Activated CD4-positive, alpha-beta memory T cell treated with anti-CD3 and anti-CD28 coated beads for 36 hours (primary cell): ENCODE measurements at regions of chr12 and their contacts with region 1.

Region 1: DNA sequence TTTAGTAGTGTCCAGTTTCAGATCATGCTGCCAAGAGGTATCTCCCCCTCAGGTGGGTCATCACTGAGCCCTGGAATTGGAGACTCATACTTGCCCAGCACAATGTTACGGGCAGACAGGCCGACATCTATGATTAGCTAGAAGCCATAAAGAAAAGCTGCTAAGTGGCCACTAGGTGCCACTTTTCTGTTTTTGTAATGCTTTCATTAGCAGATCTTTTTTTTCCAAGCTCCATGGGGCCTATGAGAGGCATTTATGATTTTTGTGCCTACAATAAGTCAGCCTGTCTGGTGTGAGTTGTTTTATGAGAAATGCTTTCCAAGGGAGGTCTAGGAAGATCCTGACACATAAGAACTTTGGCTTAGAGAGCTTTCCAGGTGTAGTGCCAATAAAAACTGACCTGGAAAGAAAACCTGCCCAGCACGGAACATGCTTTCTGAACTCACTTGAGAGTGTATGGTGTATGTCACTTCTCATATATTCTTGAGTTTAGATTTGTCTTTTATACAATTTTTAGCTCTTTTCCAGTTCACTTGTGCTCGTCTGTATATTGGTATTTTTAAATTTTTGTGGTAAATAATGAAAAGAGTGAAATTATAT is 21.8 kb upstream of the SMCO2 start:
- DNase-seq: no peak
- H3K4me3 Mint-ChIP-seq: no peak overlapping the region
- H3K27ac Mint-ChIP-seq: no peak overlapping the region
- H3K4me1 Mint-ChIP-seq: peaks cover 2% of the 10 kb centered on the region
- H3K27me3 Mint-ChIP-seq: peaks cover 2% of the 10 kb centered on the region

Region 2: GRCh38 chr12:27652174-27652763 is 227.5 kb after region 1 on chr12:
- CTCF ChIA-PET with region 1: interaction called, 15 read pairs
- POLR2A ChIA-PET with region 1: no interaction called
- intact Hi-C with region 1: no loop called
- DNase-seq: peak; percentile 14
- H3K4me3 Mint-ChIP-seq: no peak overlapping the region
- H3K27ac Mint-ChIP-seq: no peak overlapping the region
- H3K4me1 Mint-ChIP-seq: peaks cover 2% of the 10 kb centered on the region
- H3K27me3 Mint-ChIP-seq: peaks cover 2% of the 10 kb centered on the region